ENCODE measurements at regions of chr1 and their contacts with region 1.

Region 1: DNA sequence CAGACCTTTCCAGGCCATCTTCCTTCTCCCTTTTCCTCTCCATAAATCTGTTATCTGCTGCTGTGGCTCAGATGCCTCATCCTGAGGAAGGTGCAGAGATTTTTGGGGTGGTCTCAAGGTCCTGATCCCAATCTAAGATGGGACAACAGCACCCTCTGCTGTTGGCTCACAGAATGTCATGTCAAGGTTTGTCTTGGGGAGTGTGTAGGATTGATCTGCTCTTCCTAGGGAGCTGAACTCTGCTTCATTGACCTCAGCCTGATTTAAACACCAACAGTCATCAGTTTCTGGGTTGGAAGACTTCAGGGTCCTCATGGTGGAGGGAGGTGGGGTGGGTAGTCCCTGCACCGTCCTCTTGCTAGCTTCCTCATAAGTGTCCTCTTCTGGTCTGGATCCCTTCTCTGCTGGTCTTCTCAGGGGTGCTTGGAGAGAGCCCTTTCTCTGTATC is 62.8 kb upstream of the LAX1 start:
- DNase-seq: peak; percentile 80
- H3K4me3 Mint-ChIP-seq: no peak overlapping the region
- H3K27ac Mint-ChIP-seq: peak overlapping the region; percentile 67
- H3K4me1 Mint-ChIP-seq: no peaks in the 10 kb centered on the region
- H3K27me3 Mint-ChIP-seq: no peaks in the 10 kb centered on the region

Region 2: GRCh38 chr1:203267347-203267846 is 434.8 kb before region 1 on chr1:
- CTCF ChIA-PET with region 1: interaction called, 5 read pairs
- intact Hi-C with region 1: loop called (anchors 5 kb)
- DNase-seq: peak; percentile 90
- H3K4me3 Mint-ChIP-seq: peak overlapping the region; percentile 83
- H3K27ac Mint-ChIP-seq: peak overlapping the region; percentile 85
- H3K4me1 Mint-ChIP-seq: peaks cover 19% of the 10 kb centered on the region
- H3K27me3 Mint-ChIP-seq: no peaks in the 10 kb centered on the region

Region 3: DNA sequence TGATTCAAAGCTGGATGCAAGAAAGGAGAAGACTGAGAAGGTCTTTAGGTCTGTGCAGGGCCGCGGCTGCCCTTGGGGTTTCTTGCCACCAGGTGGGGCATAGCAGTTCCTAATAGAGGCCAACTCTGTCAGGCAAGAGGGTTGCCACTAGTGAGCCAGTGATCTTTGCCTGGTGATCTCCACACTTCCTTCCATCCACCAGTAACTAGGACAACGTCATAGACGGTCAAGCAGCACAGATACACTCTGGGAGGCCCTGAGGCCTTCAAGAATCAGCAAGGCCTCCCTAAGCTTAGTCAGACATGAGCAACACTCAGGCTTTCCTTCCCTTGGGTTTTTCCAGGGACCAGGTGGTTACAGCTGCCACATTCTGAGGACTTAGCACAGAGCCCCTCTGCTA is 108.4 kb before region 1 on chr1:
- CTCF ChIA-PET with region 1: interaction called, 12 read pairs
- intact Hi-C with region 1: loop called (anchors 1 kb)
- DNase-seq: peak; percentile 69
- H3K4me3 Mint-ChIP-seq: no peak overlapping the region
- H3K27ac Mint-ChIP-seq: peak overlapping the region; percentile 9
- H3K4me1 Mint-ChIP-seq: peaks cover 8% of the 10 kb centered on the region
- H3K27me3 Mint-ChIP-seq: no peaks in the 10 kb centered on the region

Region 4: GRCh38 chr1:203649999-203650855 is 51.9 kb before region 1 on chr1:
- CTCF ChIA-PET with region 1: interaction called, 11 read pairs
- intact Hi-C with region 1: no loop called
- DNase-seq: peak; percentile 76
- H3K4me3 Mint-ChIP-seq: peak overlapping the region; percentile 62
- H3K27ac Mint-ChIP-seq: peak overlapping the region; percentile 46
- H3K4me1 Mint-ChIP-seq: peaks cover 67% of the 10 kb centered on the region
- H3K27me3 Mint-ChIP-seq: no peaks in the 10 kb centered on the region

Region 5: GRCh38 chr1:203673550-203674427 is 28.4 kb before region 1 on chr1:
- CTCF ChIA-PET with region 1: interaction called, 13 read pairs
- intact Hi-C with region 1: loop called (anchors 1 kb)
- DNase-seq: peak; percentile 84
- H3K4me3 Mint-ChIP-seq: peak overlapping the region; percentile 33
- H3K27ac Mint-ChIP-seq: peak overlapping the region; percentile 77
- H3K4me1 Mint-ChIP-seq: peaks cover 45% of the 10 kb centered on the region
- H3K27me3 Mint-ChIP-seq: no peaks in the 10 kb centered on the region

Measured in activated naive CD4-positive, alpha-beta T cell treated with anti-CD3 and anti-CD28 coated beads for 36 hours (primary cell).